Heart left ventricle (tissue), 16 donors: ENCODE measurements at regions of chr10 and their contacts with region 1.

Region 1: GRCh38 chr10:101587725-101588653 is at the starts of genes DPCD and POLL:
- DNase-seq: peak; percentile 97 to 99 (median 98)
- ATAC-seq: peak; percentile 95 to 99 (median 98)
- H3K4me3 ChIP-seq: peak within 1 kb of the TSS; percentile 54 to 98 (median 78)
- H3K27ac ChIP-seq: peak within 1 kb of the TSS; percentile 20 to 83 (median 72)
- H3K4me1 ChIP-seq: peaks cover 0 to 30% (median 18%) of the 10 kb centered on the region in 12 donors
- H3K27me3 ChIP-seq: no peaks in the 10 kb centered on the region
- CTCF ChIP-seq: no peak
- POLR2A ChIP-seq: peak in 1 of 2 donors; percentile 53
- total RNA-seq, gene DPCD: 16.3 to 42.9 (median 23.2) TPM
- total RNA-seq, gene POLL: 12.3 to 21.6 (median 18.0) TPM

Region 2: GRCh38 chr10:100569618-100570473 is 1018.1 kb before region 1 on chr10:
- intact Hi-C with region 1: no loop called
- DNase-seq: no peak
- ATAC-seq: no peak
- H3K4me3 ChIP-seq: no peak overlapping the region
- H3K27ac ChIP-seq: no peak overlapping the region
- H3K4me1 ChIP-seq: no peaks in the 10 kb centered on the region
- H3K27me3 ChIP-seq: peaks cover 13 to 83% (median 49%) of the 10 kb centered on the region in 9 donors
- CTCF ChIP-seq: no peak
- POLR2A ChIP-seq: no peak

Region 3: DNA sequence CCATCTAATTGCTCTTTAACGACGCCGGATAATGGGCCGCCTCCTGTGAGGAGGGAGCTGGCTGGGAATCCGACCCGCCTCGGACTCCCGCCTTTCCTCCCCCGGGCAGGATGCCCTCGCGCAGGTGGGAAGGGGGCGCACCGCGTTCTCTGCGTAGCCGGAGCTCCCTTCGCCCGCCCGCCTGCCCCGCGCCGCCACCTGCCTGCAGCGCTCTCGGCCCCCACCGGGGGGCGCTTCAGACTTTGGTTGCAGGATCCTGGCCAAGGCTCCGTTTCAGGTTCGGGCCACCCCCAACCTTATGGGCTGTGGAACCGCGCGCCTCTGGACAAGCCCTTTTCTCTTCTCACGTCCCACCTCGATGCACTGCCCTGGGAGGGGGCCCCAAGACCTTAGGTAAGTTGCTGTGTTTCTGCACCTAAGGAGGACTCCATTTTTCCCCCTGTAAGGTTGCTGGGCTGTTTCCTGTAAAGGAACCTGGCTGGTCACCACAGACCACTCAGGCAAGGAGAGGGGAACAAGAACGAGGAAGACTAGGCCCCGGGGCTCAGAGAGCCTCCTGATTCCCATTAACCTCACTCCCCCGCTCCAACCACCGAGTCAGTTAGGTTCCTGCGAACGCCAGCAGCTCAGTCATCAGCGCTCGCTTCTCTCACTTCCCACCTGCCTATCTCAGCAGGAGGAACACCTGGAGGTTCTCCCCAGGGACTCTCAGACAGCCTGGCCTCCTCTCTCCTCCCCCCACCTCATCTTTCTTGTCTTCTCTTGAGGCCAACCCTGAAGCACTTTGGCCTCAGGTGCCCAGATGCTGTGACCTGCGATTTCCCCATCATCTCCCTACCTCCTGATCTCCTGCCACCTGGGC is 537.5 kb before region 1 on chr10:
- intact Hi-C with region 1: loop called in 1 of 10 experiments (anchors 5 kb)
- DNase-seq: peak; percentile 38 to 83 (median 56)
- ATAC-seq: peak in 3 of 4 donors; percentile 50 to 75 (median 56)
- H3K4me3 ChIP-seq: peak overlapping the region in 4 of 12 donors; percentile 7 to 25 (median 12)
- H3K27ac ChIP-seq: no peak overlapping the region
- H3K4me1 ChIP-seq: peaks cover 0 to 17% (median 7%) of the 10 kb centered on the region in 12 donors
- H3K27me3 ChIP-seq: peaks cover 27 to 57% (median 47%) of the 10 kb centered on the region in 9 donors
- CTCF ChIP-seq: peak; percentile 58 to 85 (median 76)
- POLR2A ChIP-seq: no peak